ENCODE measurements at regions of chr2 and their contacts with region 1.

Region 1: DNA sequence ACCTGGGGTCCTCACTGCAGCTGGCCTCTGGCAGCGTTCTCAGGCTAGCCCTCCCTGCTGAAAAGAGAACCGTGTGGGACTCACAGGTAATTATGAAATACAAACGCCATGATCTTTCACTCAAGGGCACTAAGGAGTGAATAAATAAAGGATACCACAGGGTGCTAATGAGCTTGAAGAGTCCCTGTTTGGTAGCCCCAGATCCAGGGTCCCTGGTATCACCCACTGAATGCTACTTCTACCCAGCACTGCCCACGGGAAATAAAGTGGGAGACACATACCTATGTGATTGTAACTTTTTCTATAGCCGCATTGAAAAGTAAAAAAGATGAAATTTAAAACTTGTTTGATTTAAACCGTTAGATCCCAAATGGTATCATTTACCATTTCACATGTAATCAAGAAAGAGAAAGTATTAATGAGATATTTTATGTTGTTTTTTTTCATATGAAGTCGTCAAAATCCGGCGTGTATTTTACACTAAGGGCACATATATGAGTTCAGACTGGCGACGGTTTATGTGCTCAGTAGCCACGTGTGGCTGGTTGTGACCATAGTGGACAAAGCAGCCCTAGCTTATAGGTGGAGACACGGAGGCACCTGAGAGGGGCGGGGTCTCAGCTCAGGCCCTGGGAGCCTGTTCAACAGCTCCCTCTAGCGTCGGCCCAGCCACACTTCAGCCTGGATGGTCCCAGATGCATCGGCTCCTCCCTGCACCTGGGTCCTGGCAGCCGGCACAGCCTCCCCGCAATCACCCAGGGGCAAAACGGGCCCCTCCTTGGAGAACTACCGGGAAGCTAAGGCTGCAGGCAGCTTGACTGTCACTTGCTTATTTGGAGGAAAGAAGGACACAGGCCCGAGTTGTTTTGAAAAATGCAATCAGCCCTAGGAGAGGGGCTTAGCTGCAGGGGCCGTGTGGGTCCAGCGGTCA is 39.2 kb downstream of the ODC1 start:
- DNase-seq: peak; percentile 93
- H3K4me3 ChIP-seq: peak overlapping the region in 1 of 4 donors; percentile 4
- H3K27ac ChIP-seq: peak overlapping the region; percentile 80 to 87 (median 86)
- H3K4me1 ChIP-seq: peaks cover 36 to 80% (median 51%) of the 10 kb centered on the region in 4 donors
- H3K27me3 ChIP-seq: no peaks in the 10 kb centered on the region
- CTCF ChIP-seq: peak; percentile 95 to 98 (median 95)
- EP300 ChIP-seq: no peak
- POLR2A ChIP-seq: peak; percentile 7

Region 2: GRCh38 chr2:10122386-10123280 is 286.3 kb before region 1 on chr2 and contains the start of gene RRM2:
- in situ Hi-C with region 1: loop called in 1 of 4 experiments (anchors 25 kb)
- intact Hi-C with region 1: no loop called
- DNase-seq: peak; percentile 94
- H3K4me3 ChIP-seq: peak within 1 kb of the TSS; percentile 43 to 65 (median 59)
- H3K27ac ChIP-seq: peak within 1 kb of the TSS; percentile 82 to 87 (median 86)
- H3K4me1 ChIP-seq: peaks cover 23 to 63% (median 44%) of the 10 kb centered on the region in 4 donors
- H3K27me3 ChIP-seq: peaks cover 15% of the 10 kb centered on the region
- CTCF ChIP-seq: no peak
- EP300 ChIP-seq: no peak
- POLR2A ChIP-seq: no peak
- total RNA-seq, gene RRM2: 4.0 to 12.9 (median 5.3) TPM in 3 of 4 donors, not detected in the other

Region 3: DNA sequence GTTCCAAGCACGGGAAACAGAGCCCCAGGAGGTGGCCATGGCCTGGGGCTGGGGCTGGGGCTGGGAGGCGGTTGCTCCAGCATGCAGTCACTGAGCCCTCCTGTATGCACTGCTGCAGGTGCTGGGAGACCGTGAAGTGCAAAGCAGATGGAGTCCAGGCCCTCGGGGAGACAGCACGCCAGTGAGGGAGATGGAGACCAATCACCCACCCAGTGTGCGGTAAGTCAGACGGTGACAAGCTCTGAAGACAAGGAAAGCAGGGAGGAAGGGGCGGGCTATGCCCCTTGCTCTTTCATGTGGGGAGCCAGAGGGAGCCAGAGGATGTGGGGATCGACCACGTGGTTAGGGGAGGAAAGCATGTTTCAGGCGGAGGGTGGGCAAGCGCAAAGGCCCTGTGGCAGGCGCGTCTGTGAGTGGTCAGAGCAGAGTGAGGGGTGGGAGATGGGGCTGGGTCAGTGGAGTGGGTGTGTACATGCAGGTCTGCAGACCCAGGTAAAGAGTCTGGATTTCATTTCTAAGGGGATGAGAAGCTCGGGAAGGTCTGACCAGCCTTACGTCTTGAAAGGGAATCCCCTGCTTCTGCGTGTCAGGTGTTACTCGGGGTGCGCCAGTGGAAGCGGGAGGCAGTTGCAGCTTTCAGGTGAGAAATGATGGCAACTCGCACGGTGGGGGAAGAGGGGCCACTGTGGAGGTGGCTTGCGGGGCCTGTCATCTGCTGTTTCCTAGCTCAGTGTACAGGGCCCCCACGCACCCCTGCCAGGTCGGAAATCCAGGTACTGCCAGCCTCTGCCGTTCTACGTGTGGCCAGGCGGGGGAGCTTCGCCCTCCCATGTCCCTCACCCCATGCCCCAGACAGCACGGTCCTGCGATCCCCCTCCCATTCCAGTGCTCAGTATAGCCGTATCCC is 266.9 kb before region 1 on chr2:
- in situ Hi-C with region 1: loop called in 2 of 4 experiments (anchors 10 to 25 kb)
- intact Hi-C with region 1: no loop called
- DNase-seq: peak; percentile 49
- H3K4me3 ChIP-seq: no peak overlapping the region
- H3K27ac ChIP-seq: peak overlapping the region in 1 of 4 donors; percentile 0
- H3K4me1 ChIP-seq: peaks cover 4 to 10% (median 8%) of the 10 kb centered on the region in 4 donors
- H3K27me3 ChIP-seq: no peaks in the 10 kb centered on the region
- CTCF ChIP-seq: peak; percentile 56 to 84 (median 66)
- EP300 ChIP-seq: no peak
- POLR2A ChIP-seq: no peak

Region 4: GRCh38 chr2:10285556-10286198 is 123.2 kb before region 1 on chr2:
- in situ Hi-C with region 1: loop called in 1 of 4 experiments (anchors 25 kb)
- intact Hi-C with region 1: loop called (anchors 5 kb)
- DNase-seq: peak; percentile 58
- H3K4me3 ChIP-seq: no peak overlapping the region
- H3K27ac ChIP-seq: peak overlapping the region; percentile 29 to 58 (median 48)
- H3K4me1 ChIP-seq: peaks cover 10 to 18% (median 15%) of the 10 kb centered on the region in 4 donors
- H3K27me3 ChIP-seq: no peaks in the 10 kb centered on the region
- CTCF ChIP-seq: no peak
- EP300 ChIP-seq: no peak
- POLR2A ChIP-seq: no peak

Region 5: DNA sequence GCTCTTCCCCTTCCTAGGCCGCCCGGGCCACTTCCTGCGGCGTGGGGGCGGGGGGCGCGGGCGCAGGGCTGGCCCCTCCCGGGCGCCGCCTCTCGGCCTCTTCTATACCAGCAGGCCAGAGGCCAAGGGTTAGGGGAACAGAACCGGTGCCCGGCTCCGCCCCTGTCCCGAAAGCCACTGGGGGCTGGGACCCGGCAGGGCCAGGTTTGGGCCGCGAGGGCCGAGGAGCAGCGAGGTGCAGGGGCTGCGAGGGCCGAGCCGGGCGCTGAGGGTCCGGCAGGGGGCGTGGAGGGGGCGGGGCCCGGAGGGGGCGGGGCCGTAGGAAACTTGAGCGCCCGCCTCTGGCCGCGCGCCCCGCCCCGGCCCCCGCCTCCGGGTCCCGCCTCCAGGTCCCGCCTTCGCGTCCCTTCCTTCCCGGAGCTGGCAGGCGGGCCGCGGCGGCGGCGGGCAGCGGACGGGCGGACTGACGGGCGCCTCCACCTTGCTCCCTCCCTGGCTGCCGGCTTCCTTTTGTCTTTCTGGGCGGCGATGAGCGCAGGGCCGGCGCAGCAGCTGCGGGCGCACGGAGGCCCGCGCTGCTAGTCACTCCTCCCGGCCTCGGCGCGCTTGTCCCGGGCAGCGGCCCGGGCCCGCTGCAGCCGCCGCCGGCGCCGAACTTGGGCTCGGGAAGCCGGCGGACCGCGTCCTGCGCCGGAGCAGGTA is 106.3 kb before region 1 on chr2 and contains the start of gene HPCAL1:
- in situ Hi-C with region 1: loop called in 1 of 4 experiments (anchors 25 kb)
- intact Hi-C with region 1: loop called (anchors 5 kb)
- DNase-seq: peak; percentile 94
- H3K4me3 ChIP-seq: peak within 1 kb of the TSS; percentile 65 to 95 (median 84)
- H3K27ac ChIP-seq: peak within 1 kb of the TSS; percentile 82 to 95 (median 91)
- H3K4me1 ChIP-seq: peaks cover 18 to 47% (median 36%) of the 10 kb centered on the region in 4 donors
- H3K27me3 ChIP-seq: no peaks in the 10 kb centered on the region
- CTCF ChIP-seq: peak; percentile 55 to 82 (median 67)
- EP300 ChIP-seq: no peak
- POLR2A ChIP-seq: peak; percentile 78
- total RNA-seq, gene HPCAL1: 88.9 to 221 (median 129) TPM

Region 6: GRCh38 chr2:10954876-10955754 is 546.2 kb after region 1 on chr2:
- in situ Hi-C with region 1: no loop called
- intact Hi-C with region 1: no loop called
- DNase-seq: no peak
- H3K4me3 ChIP-seq: no peak overlapping the region
- H3K27ac ChIP-seq: no peak overlapping the region
- H3K4me1 ChIP-seq: no peaks in the 10 kb centered on the region
- H3K27me3 ChIP-seq: no peaks in the 10 kb centered on the region
- CTCF ChIP-seq: no peak
- EP300 ChIP-seq: no peak
- POLR2A ChIP-seq: no peak

Measured in transverse colon (tissue), 4 donors.